Activated CD8-positive, alpha-beta T cell treated with anti-CD3 and anti-CD28 coated beads for 36 hours (primary cell): ENCODE measurements at regions of chr5 and their contacts with region 1.

Region 1: GRCh38 chr5:114449860-114450421 is 88.1 kb downstream of the KCNN2 start:
- DNase-seq: peak; percentile 74
- ATAC-seq: peak; percentile 97
- H3K4me3 Mint-ChIP-seq: no peak overlapping the region
- H3K27ac Mint-ChIP-seq: no peak overlapping the region
- H3K4me1 Mint-ChIP-seq: no peaks in the 10 kb centered on the region
- H3K27me3 Mint-ChIP-seq: peaks cover 1% of the 10 kb centered on the region
- CTCF ChIP-seq: peak; percentile 54

Region 2: GRCh38 chr5:113612060-113612496 is 837.9 kb before region 1 on chr5:
- CTCF ChIA-PET with region 1: interaction called, 15 read pairs
- POLR2A ChIA-PET with region 1: no interaction called
- intact Hi-C with region 1: loop called (anchors 5 kb)
- DNase-seq: no peak
- ATAC-seq: peak; percentile 70
- H3K4me3 Mint-ChIP-seq: no peak overlapping the region
- H3K27ac Mint-ChIP-seq: no peak overlapping the region
- H3K4me1 Mint-ChIP-seq: peaks cover 7% of the 10 kb centered on the region
- H3K27me3 Mint-ChIP-seq: peaks cover 12% of the 10 kb centered on the region
- CTCF ChIP-seq: peak; percentile 78

Region 3: GRCh38 chr5:113678924-113679575 is 770.9 kb before region 1 on chr5:
- CTCF ChIA-PET with region 1: interaction called, 13 read pairs
- POLR2A ChIA-PET with region 1: no interaction called
- intact Hi-C with region 1: loop called (anchors 2 kb)
- DNase-seq: peak; percentile 45
- ATAC-seq: peak; percentile 69
- H3K4me3 Mint-ChIP-seq: no peak overlapping the region
- H3K27ac Mint-ChIP-seq: no peak overlapping the region
- H3K4me1 Mint-ChIP-seq: no peaks in the 10 kb centered on the region
- H3K27me3 Mint-ChIP-seq: no peaks in the 10 kb centered on the region
- CTCF ChIP-seq: peak; percentile 43

Region 4: GRCh38 chr5:114665551-114665950 is 215.6 kb after region 1 on chr5:
- CTCF ChIA-PET with region 1: no interaction called
- POLR2A ChIA-PET with region 1: no interaction called
- intact Hi-C with region 1: no loop called
- DNase-seq: no peak
- ATAC-seq: no peak
- H3K4me3 Mint-ChIP-seq: no peak overlapping the region
- H3K27ac Mint-ChIP-seq: no peak overlapping the region
- H3K4me1 Mint-ChIP-seq: no peaks in the 10 kb centered on the region
- H3K27me3 Mint-ChIP-seq: no peaks in the 10 kb centered on the region
- CTCF ChIP-seq: no peak